ENCODE measurements at regions of chr22 and their contacts with region 1.

Region 1: GRCh38 chr22:46219636-46220035 is 30.5 kb downstream of the CDPF1 start:
- DNase-seq: no peak
- H3K4me3 ChIP-seq: no peak overlapping the region
- H3K27ac ChIP-seq: no peak overlapping the region
- H3K4me1 ChIP-seq: no peaks in the 10 kb centered on the region
- H3K27me3 ChIP-seq: no peaks in the 10 kb centered on the region
- CTCF ChIP-seq: no peak

Region 2: DNA sequence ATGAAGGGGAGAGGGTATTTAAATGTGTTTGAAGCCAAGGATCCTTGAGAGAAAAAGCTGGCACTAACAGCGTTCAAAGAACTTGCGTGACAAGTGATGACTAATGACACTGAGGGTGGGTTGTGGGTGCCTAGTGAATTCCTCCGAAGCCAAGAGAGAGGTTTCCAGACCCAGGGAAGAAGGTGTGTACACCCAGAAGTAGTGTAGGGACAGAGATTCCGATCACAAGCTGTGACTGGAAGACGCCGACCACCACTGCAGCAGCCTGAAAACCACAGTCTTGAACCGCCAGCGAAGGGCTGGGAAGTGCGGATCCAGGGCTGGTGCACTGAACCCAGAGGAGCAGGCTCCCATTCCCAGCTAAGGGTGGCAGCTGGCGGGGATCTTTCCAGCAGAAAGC is 59.9 kb before region 1 on chr22:
- CTCF ChIA-PET with region 1: no interaction called
- dilution Hi-C with region 1: no loop called
- in situ Hi-C with region 1: no loop called
- intact Hi-C with region 1: loop called (anchors 5 kb)
- DNase-seq: peak; percentile 37
- H3K4me3 ChIP-seq: no peak overlapping the region
- H3K27ac ChIP-seq: no peak overlapping the region
- H3K4me1 ChIP-seq: no peaks in the 10 kb centered on the region
- H3K27me3 ChIP-seq: no peaks in the 10 kb centered on the region
- CTCF ChIP-seq: no peak